Activated B cell treated with CpG ODN at 0.5 μM for 24 hours (primary cell): ENCODE measurements at regions of chr6 and their contacts with region 1.

Region 1: GRCh38 chr6:132760256-132760655 is 2.6 kb upstream of the VNN2 start:
- DNase-seq: no peak
- ATAC-seq: no peak
- H3K4me3 Mint-ChIP-seq: no peak overlapping the region
- H3K27ac Mint-ChIP-seq: peak overlapping the region; percentile 14
- H3K4me1 Mint-ChIP-seq: peaks cover 44% of the 10 kb centered on the region
- H3K27me3 Mint-ChIP-seq: no peaks in the 10 kb centered on the region
- CTCF ChIP-seq: no peak

Region 2: GRCh38 chr6:134058622-134059366 is 1298.5 kb after region 1 on chr6:
- CTCF ChIA-PET with region 1: no interaction called
- POLR2A ChIA-PET with region 1: interaction called, 11 read pairs
- intact Hi-C with region 1: no loop called
- DNase-seq: no peak
- ATAC-seq: no peak
- H3K4me3 Mint-ChIP-seq: no peak overlapping the region
- H3K27ac Mint-ChIP-seq: no peak overlapping the region
- H3K4me1 Mint-ChIP-seq: peaks cover under 1% of the 10 kb centered on the region
- H3K27me3 Mint-ChIP-seq: no peaks in the 10 kb centered on the region
- CTCF ChIP-seq: no peak